A549 (cell line): ENCODE measurements at regions of chr7 and their contacts with region 1.

Region 1: GRCh38 chr7:116340943-116341907 is 130.9 kb downstream of the TES start:
- DNase-seq: peak in 1 of 2 experiments; percentile 48
- ATAC-seq: peak in 1 of 2 experiments; percentile 81; a peak in 3 of 6 replicates
- H3K4me3 ChIP-seq: no peak overlapping the region
- H3K27ac ChIP-seq: peak overlapping the region; percentile 44 to 68; a peak in 5 of 6 replicates
- H3K4me1 ChIP-seq: peaks cover 35% of the 10 kb centered on the region
- CTCF ChIP-seq: peak; percentile 36
- EP300 ChIP-seq: no peak
- POLR2A ChIP-seq: no peak
- RAD21 ChIP-seq: peak; percentile 49 to 59

Region 2: GRCh38 chr7:116331020-116331419 is 10.2 kb before region 1 on chr7:
- CTCF ChIA-PET with region 1: no interaction called
- POLR2A ChIA-PET with region 1: no interaction called
- DNase-seq: no peak
- ATAC-seq: no peak
- H3K4me3 ChIP-seq: no peak overlapping the region
- H3K27ac ChIP-seq: 0 out of 6 replicates have a peak overlapping the region, but pooled peaks of 1 of the 2 experiments have one; percentile 9
- H3K4me1 ChIP-seq: 0 out of 3 replicates have a peak, but pooled peaks cover 11% of the 10 kb centered on the region
- CTCF ChIP-seq: no peak
- EP300 ChIP-seq: no peak
- POLR2A ChIP-seq: no peak
- RAD21 ChIP-seq: no peak

Region 3: DNA sequence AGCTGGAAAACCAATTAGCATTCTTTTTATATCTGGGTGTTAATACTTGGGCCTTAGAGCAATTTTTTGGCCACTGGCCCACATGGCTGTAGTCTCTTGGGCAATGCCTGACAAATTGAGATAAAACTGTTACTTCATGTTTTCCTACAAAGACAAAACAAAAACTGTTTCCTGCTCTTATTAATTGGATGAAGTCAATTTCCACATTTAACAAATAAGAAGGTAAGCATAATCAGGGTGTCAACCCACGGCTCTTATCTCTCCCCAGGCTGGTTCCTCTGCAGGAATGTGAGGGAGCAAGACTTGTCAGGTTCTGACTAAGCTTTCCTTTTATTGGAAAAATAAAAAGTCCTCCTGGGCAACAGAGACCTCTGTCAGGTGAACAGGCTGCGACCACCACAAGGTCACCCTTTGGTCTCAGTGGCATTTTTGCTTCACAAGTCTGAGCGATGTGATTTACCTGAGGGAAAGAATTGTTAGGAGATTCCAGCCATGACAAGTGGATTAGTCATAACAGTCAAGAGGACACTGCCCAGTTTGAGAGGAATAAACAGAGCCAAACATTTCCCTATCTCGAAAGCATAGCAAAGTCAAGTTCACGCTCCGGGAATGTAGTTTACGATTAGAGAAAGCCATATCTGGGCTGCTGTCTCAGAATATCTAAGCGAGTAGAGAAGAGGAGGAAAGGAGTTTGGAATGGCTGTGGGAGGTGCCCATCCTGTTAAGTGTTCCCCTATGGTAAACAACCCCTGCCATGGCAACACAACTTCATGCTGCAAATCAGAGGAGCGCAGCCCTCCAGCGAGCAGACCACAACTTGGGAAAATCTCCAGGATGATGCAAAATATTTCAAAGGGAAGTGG is 13.6 kb after region 1 on chr7:
- CTCF ChIA-PET with region 1: interaction called, 16 read pairs
- POLR2A ChIA-PET with region 1: no interaction called
- DNase-seq: peak; percentile 75 to 97
- ATAC-seq: peak; percentile 96
- H3K4me3 ChIP-seq: peak overlapping the region; percentile 30
- H3K27ac ChIP-seq: peak overlapping the region; percentile 84 to 91
- H3K4me1 ChIP-seq: peaks cover 52% of the 10 kb centered on the region
- CTCF ChIP-seq: no peak
- EP300 ChIP-seq: peak; percentile 23 to 68; a peak in 2 of 5 replicates
- POLR2A ChIP-seq: no peak
- RAD21 ChIP-seq: peak; percentile 35 to 45; a peak in 3 of 5 replicates

Region 4: DNA sequence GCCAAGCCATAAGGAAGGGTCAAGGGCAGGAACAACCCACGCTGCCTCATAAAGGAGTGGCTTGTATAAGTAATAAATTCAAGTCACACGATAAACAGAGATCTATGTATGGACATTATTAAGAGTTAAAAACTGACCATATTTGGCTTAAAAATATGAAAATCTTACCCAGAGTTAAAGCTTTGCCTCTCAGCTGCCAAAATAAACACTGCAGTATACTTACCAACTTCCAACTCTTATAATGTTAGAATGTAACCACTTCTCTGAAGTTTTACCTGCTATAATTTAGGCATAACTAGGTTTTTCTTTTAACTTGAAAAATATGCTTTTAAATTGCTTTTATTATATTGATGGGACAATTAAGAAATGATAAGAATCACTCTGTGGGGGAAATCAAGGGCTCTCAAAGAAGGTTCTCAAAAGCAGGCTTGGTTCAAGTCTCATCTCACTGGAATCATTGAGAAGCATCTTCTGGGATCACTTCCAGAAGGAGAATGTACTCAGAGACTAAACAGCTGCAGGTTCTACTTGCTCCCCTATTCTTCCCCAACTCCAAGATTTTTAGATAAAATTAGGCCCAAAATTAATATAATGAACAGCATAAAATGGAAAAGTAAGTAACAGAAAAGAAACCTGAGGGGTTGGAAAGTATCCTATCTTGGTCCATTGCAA is 142.2 kb after region 1 on chr7:
- CTCF ChIA-PET with region 1: no interaction called
- POLR2A ChIA-PET with region 1: no interaction called
- DNase-seq: no peak
- ATAC-seq: no peak
- H3K4me3 ChIP-seq: no peak overlapping the region
- H3K27ac ChIP-seq: 0 out of 6 replicates have a peak overlapping the region, but pooled peaks of 1 of the 2 experiments have one; percentile 4
- H3K4me1 ChIP-seq: peaks cover 16% of the 10 kb centered on the region
- CTCF ChIP-seq: no peak
- EP300 ChIP-seq: no peak
- POLR2A ChIP-seq: no peak
- RAD21 ChIP-seq: no peak

Region 5: DNA sequence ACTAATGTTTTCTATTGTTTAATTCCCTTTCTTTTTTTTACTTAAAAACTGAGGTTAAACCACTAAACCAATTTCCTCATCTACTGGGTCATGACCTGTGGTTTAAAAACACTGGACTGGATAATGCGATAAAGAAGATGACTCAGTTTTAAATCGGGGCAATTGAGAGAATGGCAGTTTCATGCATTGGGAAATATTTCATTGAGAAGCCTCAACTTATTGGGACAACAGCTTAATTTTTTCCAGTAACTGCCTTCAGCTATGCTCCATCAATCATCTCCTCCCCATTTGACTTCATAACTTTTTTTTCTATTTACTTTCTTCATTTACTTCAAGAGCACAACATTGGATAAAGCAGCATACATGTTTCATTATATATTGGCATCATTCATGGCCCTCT is 269.0 kb after region 1 on chr7:
- CTCF ChIA-PET with region 1: no interaction called
- POLR2A ChIA-PET with region 1: no interaction called
- DNase-seq: no peak
- ATAC-seq: no peak
- H3K4me3 ChIP-seq: no peak overlapping the region
- H3K27ac ChIP-seq: no peak overlapping the region
- H3K4me1 ChIP-seq: peaks cover 22% of the 10 kb centered on the region
- CTCF ChIP-seq: no peak
- EP300 ChIP-seq: no peak
- POLR2A ChIP-seq: no peak
- RAD21 ChIP-seq: no peak